MCF 10A (cell line): ENCODE measurements at regions of chr14 and their contacts with region 1.

Region 1: GRCh38 chr14:35374273-35374681 is 30.3 kb downstream of the NFKBIA start:
- DNase-seq: peak; percentile 99
- H3K4me3 Mint-ChIP-seq: peak overlapping the region; percentile 4
- H3K27ac Mint-ChIP-seq: peak overlapping the region; percentile 92
- H3K4me1 Mint-ChIP-seq: peaks cover 12% of the 10 kb centered on the region
- H3K27me3 Mint-ChIP-seq: no peaks in the 10 kb centered on the region
- CTCF ChIP-seq: no peak

Region 2: DNA sequence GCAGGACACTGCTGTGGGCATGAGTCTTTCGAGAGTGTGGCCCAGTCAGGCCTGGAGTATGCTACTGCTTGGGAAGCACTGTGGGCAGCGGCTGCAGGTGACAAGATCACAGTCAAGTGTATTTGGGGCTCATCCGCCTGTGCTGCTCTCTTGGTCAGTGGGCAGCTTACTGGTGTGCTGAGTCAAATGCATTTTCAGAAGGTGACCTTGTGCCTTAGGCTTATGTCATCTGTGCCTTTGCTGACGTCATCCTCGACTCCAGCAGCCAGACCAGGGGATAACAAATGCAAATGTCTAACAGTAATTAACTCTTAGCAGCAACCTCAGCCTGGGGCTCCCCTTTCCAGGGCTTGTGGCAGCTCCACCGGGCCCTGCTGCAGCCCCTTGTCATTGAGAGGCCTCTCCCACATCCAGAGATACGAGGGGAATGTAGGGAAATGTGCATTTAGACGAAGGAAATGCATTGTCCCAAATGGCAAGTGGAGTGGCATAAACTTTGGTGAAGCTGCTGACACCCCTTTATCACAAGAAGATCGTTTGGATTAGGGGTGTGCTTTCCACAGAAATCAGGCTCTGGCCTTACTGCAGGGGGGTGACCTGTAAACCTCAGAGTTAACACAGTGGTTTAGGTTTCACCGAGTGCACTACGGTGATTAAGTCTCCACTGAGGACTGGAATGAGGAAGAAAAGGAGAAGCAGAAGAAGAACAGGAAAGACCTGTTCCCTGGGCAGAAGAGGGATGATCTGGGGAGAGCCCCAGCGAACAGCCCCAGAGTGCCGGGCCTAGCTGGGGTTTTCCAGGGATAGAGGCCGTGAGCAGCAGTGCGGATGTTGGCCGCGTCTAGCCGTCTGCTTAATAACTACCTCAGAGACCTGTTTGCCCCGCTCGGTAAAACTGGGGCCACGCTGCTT is 42.4 kb before region 1 on chr14:
- CTCF ChIA-PET with region 1: interaction called, 9 read pairs
- POLR2A ChIA-PET with region 1: interaction called, 42 read pairs
- intact Hi-C with region 1: no loop called
- DNase-seq: no peak
- H3K4me3 Mint-ChIP-seq: peak overlapping the region; percentile 6
- H3K27ac Mint-ChIP-seq: peak overlapping the region; percentile 66
- H3K4me1 Mint-ChIP-seq: peaks cover 24% of the 10 kb centered on the region
- H3K27me3 Mint-ChIP-seq: no peaks in the 10 kb centered on the region
- CTCF ChIP-seq: no peak

Region 3: GRCh38 chr14:35385042-35385839 is 11.0 kb after region 1 on chr14:
- CTCF ChIA-PET with region 1: interaction called, 7 read pairs
- POLR2A ChIA-PET with region 1: interaction called, 40 read pairs
- intact Hi-C with region 1: no loop called
- DNase-seq: peak; percentile 93
- H3K4me3 Mint-ChIP-seq: no peak overlapping the region
- H3K27ac Mint-ChIP-seq: peak overlapping the region; percentile 76
- H3K4me1 Mint-ChIP-seq: peaks cover 20% of the 10 kb centered on the region
- H3K27me3 Mint-ChIP-seq: no peaks in the 10 kb centered on the region
- CTCF ChIP-seq: no peak